Endothelial cell of umbilical vein (primary cell): ENCODE measurements at regions of chr2 and their contacts with region 1.

Region 1: DNA sequence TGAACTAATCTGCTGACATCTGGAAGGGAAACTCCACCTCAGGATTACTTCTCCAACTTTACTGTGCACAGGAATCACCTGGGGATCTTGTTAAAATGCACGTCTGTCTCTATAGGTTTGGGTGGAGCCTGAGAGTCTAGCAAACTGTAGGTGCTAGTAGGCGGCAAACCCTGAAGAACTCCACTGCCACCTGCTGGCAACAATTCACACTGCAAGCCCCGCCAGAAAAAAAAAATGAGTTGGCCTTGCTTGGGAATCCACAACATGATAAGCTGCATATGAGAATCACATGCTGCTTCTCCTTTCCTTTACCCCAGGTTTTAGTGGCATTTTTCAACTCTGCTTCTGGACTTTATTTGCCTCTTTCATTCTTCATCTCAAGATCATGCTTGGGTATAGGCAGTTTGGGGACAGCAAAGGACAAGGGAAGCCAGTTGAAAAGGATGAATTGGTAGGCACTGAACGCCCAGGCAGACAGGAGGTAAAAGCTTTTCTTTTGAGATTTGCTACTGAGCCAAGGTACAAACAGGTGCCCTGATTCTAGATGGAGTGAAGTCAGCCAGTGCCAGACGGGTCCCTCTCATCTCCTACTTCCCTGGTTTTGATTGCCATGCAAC is 88.8 kb downstream of the VIT start:
- DNase-seq: peak; percentile 77
- H3K4me3 ChIP-seq: no peak overlapping the region
- H3K27ac ChIP-seq: no peak overlapping the region
- H3K4me1 ChIP-seq: no peaks in the 10 kb centered on the region
- H3K27me3 ChIP-seq: peaks cover 13 to 22% of the 10 kb centered on the region in 2 experiments
- CTCF ChIP-seq: peak; percentile 84 to 89
- POLR2A ChIP-seq: no peak

Region 2: GRCh38 chr2:36450466-36451196 is 334.7 kb before region 1 on chr2:
- CTCF ChIA-PET with region 1: no interaction called
- POLR2A ChIA-PET with region 1: no interaction called
- dilution Hi-C with region 1: no loop called
- intact Hi-C with region 1: no loop called
- DNase-seq: no peak
- H3K4me3 ChIP-seq: no peak overlapping the region
- H3K27ac ChIP-seq: peak overlapping the region; percentile 73
- H3K4me1 ChIP-seq: peaks cover 100% of the 10 kb centered on the region
- H3K27me3 ChIP-seq: no peaks in the 10 kb centered on the region
- CTCF ChIP-seq: no peak
- POLR2A ChIP-seq: no peak

Region 3: GRCh38 chr2:36770542-36771287 is 14.6 kb before region 1 on chr2:
- CTCF ChIA-PET with region 1: interaction called, 49 read pairs
- POLR2A ChIA-PET with region 1: no interaction called
- dilution Hi-C with region 1: no loop called
- intact Hi-C with region 1: no loop called
- DNase-seq: peak; percentile 49
- H3K4me3 ChIP-seq: no peak overlapping the region
- H3K27ac ChIP-seq: no peak overlapping the region
- H3K4me1 ChIP-seq: no peaks in the 10 kb centered on the region
- H3K27me3 ChIP-seq: peaks cover 1 to 6% of the 10 kb centered on the region in 2 experiments
- CTCF ChIP-seq: peak; percentile 79
- POLR2A ChIP-seq: no peak

Region 4: GRCh38 chr2:36797324-36798070 is 12.2 kb after region 1 on chr2:
- CTCF ChIA-PET with region 1: interaction called, 45 read pairs
- POLR2A ChIA-PET with region 1: no interaction called
- dilution Hi-C with region 1: no loop called
- intact Hi-C with region 1: no loop called
- DNase-seq: no peak
- H3K4me3 ChIP-seq: no peak overlapping the region
- H3K27ac ChIP-seq: no peak overlapping the region
- H3K4me1 ChIP-seq: no peaks in the 10 kb centered on the region
- H3K27me3 ChIP-seq: peaks cover 17 to 40% of the 10 kb centered on the region in 2 experiments
- CTCF ChIP-seq: no peak
- POLR2A ChIP-seq: no peak

Region 5: DNA sequence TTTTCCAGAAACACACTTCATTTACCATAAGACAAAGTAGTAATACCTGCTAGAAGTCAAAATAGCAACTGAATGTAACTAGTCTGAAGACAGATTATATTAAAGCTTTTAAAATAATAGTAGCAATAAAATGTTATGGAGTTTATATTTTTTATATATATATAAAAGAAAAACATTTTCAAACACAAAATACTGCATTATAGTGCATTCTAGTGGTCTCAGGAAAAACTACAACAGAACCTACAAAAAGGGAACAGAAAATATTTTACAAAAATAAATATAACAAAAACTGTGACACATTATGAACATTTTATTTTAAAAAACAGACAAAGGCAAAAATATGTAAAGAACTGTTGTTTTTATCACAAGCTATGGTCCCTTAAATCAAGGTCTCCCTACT is 133.0 kb after region 1 on chr2:
- CTCF ChIA-PET with region 1: interaction called, 5 read pairs
- POLR2A ChIA-PET with region 1: no interaction called
- dilution Hi-C with region 1: no loop called
- intact Hi-C with region 1: loop called (anchors 1 kb)
- DNase-seq: peak; percentile 10
- H3K4me3 ChIP-seq: no peak overlapping the region
- H3K27ac ChIP-seq: no peak overlapping the region
- H3K4me1 ChIP-seq: no peaks in the 10 kb centered on the region
- H3K27me3 ChIP-seq: no peaks in the 10 kb centered on the region
- CTCF ChIP-seq: peak in 1 of 2 donors; percentile 10
- POLR2A ChIP-seq: no peak

Region 6: DNA sequence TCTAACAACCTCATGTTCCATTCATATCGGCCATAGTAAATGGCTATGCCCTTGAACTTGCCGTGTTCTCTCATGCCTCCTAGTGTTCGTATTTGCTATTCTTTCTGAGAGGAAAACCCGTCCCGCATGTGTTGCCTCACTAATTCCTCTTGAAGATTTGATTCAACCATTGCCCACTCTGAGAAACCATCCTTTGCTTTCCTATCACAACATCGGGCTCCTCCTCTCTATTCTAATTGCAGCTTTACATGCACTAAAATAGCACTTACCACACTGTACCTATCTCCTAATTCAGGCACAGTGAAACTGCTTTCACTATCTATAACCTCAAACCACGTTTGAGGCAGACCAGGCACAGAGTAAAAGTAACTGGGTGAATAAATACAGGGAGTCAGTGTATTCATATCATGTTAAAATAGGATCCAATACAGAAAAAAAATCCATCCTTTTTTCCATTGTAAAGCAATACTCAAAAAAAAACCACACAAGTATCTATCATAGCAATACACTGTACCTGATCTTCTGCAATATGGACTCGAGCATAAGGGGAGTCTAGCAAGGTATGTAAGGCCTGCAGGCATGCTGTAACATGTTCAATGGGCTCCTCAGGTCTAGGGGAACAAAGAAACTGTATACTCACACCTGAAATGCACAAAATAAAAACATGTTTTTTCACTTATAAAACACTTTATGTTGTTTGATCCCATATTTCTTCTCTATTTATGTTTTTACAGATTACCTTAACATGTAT is 220.0 kb after region 1 on chr2:
- CTCF ChIA-PET with region 1: interaction called, 4 read pairs
- POLR2A ChIA-PET with region 1: no interaction called
- dilution Hi-C with region 1: no loop called
- intact Hi-C with region 1: loop called (anchors 1 kb)
- DNase-seq: peak; percentile 58
- H3K4me3 ChIP-seq: no peak overlapping the region
- H3K27ac ChIP-seq: no peak overlapping the region
- H3K4me1 ChIP-seq: peaks cover 8% of the 10 kb centered on the region
- H3K27me3 ChIP-seq: no peaks in the 10 kb centered on the region
- CTCF ChIP-seq: peak; percentile 42 to 44
- POLR2A ChIP-seq: no peak

Region 7: DNA sequence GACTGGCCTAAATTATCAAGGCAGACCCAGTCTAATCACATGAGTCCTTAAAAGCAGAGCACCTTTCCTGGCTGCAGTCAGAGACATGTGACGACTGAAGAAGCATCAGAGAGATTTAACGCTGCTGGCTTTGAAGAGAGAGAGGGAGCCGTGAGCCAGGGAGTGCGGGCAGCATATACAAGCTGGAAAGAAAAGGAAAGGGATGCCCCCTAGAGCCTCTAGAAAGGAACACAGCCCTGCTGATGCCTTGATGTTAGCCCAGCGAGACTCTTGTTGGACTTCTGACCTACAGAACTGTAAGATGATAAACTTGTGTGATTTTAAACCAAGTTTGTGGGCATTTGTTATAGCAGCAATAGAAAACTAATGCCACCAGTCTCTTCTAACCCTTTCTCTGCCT is 240.8 kb after region 1 on chr2:
- CTCF ChIA-PET with region 1: no interaction called
- POLR2A ChIA-PET with region 1: no interaction called
- dilution Hi-C with region 1: no loop called
- intact Hi-C with region 1: loop called (anchors 1 kb)
- DNase-seq: no peak
- H3K4me3 ChIP-seq: no peak overlapping the region
- H3K27ac ChIP-seq: no peak overlapping the region
- H3K4me1 ChIP-seq: peaks cover 1% of the 10 kb centered on the region
- H3K27me3 ChIP-seq: no peaks in the 10 kb centered on the region
- CTCF ChIP-seq: peak; percentile 2 to 8
- POLR2A ChIP-seq: no peak

Region 8: DNA sequence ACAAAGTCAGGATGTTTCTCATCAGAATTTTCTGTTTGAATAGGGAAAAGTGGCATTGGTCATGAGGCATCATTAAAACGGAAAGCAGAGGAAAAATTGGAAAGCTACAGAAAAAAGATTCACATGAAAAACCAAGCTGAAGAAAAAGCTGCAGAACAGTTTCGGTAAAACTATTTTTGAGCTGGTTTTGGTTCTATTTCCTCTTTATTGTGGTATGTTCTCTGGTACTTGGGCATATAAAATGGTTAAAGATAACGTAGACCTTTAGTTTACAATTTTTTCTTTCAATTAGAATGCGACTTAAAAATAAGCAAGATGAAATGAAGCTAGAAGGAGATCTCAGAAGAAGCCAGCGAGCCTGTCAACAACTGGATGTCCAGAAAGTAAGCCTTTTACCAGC is 306.6 kb after region 1 on chr2:
- CTCF ChIA-PET with region 1: no interaction called
- POLR2A ChIA-PET with region 1: no interaction called
- dilution Hi-C with region 1: no loop called
- intact Hi-C with region 1: no loop called
- DNase-seq: no peak
- H3K4me3 ChIP-seq: no peak overlapping the region
- H3K27ac ChIP-seq: no peak overlapping the region
- H3K4me1 ChIP-seq: no peaks in the 10 kb centered on the region
- H3K27me3 ChIP-seq: no peaks in the 10 kb centered on the region
- CTCF ChIP-seq: no peak
- POLR2A ChIP-seq: no peak

Region 9: GRCh38 chr2:38535744-38536506 is 1750.6 kb after region 1 on chr2:
- CTCF ChIA-PET with region 1: no interaction called
- POLR2A ChIA-PET with region 1: no interaction called
- dilution Hi-C with region 1: no loop called
- intact Hi-C with region 1: no loop called
- DNase-seq: peak; percentile 75
- H3K4me3 ChIP-seq: peak overlapping the region; percentile 34 to 57 (median 52)
- H3K27ac ChIP-seq: no peak overlapping the region
- H3K4me1 ChIP-seq: no peaks in the 10 kb centered on the region
- H3K27me3 ChIP-seq: no peaks in the 10 kb centered on the region
- CTCF ChIP-seq: peak; percentile 94 to 96
- POLR2A ChIP-seq: no peak